HEK293 (cell line): ENCODE measurements at regions of chr21 and their contacts with region 1.

Region 1: DNA sequence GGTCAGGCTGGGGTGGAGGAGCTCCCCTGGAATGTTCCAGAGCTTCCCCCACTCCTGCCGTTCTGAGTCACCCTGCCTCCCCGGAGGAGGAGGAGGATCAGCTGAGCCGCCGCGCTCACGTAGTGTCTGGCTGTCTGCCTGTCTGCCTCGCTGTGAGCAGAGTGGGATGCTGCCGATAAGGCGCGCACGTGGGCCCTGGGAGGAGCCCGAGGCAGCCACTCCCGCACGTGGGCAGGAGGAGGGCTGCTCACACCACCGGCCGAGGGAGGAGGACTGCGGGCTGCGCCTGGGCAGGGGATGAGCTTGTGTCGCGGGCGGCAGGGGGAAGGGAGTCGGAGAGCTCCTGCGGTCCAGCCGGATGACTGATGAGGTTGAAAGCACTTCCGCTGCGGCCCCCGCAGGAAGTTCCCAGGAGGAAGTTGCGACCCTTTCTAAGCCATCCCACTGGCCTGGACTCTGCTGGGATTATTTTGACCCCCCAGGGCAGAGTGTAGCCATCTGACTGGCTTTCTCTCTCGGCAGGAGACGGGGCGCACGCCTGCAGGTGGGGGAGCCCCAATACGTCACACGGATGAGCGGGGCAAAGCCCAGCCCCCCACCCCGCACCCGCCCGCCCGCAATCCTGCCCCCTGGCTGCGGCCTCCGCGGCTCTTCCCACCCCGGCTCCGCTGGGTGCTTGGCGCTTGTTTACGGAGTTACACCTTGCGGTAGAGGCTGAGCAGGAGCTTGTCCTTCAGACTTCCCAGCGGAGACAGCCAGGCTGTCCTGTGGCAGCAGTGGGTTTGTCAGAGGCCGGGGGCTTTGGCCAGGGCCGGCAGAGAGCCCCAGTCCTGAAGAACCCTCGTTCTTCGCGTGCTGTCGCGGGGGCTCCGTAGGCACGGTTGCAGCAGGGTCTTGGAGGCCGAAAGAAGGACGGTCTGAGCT is 9.8 kb downstream of the PDXK start:
- H3K4me3 ChIP-seq: peak overlapping the region; percentile 67
- H3K27ac ChIP-seq: peak overlapping the region; percentile 38
- H3K4me1 ChIP-seq: peaks cover 6% of the 10 kb centered on the region; the same call in 1 of the 2 replicates
- CTCF ChIP-seq: peak; percentile 49; the same call in 1 of the 2 replicates

Region 2: DNA sequence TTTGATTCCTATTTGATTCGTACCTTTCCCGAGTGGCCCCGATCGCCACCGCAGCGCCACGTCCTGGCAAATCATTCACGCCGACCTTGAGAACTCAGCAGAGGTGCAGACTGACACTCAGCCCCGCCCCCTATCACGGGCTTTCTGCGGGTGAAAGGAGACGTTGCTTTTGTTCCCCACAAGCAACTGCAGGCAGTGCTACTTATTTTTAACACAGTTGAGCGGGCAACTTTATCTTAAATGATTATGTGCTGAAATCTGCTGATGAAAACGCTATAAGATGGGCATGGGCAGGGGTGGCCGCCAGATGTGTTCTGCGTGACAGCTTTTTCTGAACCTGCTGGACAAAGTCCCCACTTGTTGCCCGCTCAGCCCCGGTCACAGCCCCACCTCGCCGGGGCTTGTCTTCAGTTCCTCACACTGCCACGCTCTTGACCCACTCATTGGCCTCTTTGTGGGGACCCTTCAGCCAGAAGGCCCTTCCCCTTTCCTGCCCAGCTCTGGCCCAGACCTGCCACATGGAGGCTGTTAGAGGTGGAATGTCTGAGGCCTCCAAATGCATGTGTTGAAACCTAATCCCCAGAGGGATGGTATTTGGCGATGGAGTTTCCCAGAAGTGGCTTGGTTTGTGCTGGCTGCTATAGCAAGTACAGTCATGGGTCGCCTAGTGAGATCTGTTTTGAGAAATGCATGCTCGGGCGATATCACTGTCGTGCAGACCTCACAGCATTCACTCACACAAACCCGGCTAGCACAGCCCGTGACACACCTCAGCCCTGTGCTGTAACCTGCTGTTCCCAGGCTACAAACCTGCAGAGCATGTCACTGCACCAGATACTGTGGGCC is 25.5 kb before region 1 on chr21:
- CTCF ChIA-PET with region 1: interaction called, 12 read pairs
- POLR2A ChIA-PET with region 1: interaction called, 5 read pairs
- H3K4me3 ChIP-seq: no peak overlapping the region
- H3K27ac ChIP-seq: no peak overlapping the region
- H3K4me1 ChIP-seq: no peaks in the 10 kb centered on the region
- CTCF ChIP-seq: no peak

Region 3: GRCh38 chr21:43740497-43741156 is 11.9 kb after region 1 on chr21:
- CTCF ChIA-PET with region 1: interaction called, 4 read pairs
- POLR2A ChIA-PET with region 1: interaction called, 12 read pairs
- H3K4me3 ChIP-seq: no peak overlapping the region
- H3K27ac ChIP-seq: no peak overlapping the region
- H3K4me1 ChIP-seq: no peaks in the 10 kb centered on the region
- CTCF ChIP-seq: no peak

Region 4: DNA sequence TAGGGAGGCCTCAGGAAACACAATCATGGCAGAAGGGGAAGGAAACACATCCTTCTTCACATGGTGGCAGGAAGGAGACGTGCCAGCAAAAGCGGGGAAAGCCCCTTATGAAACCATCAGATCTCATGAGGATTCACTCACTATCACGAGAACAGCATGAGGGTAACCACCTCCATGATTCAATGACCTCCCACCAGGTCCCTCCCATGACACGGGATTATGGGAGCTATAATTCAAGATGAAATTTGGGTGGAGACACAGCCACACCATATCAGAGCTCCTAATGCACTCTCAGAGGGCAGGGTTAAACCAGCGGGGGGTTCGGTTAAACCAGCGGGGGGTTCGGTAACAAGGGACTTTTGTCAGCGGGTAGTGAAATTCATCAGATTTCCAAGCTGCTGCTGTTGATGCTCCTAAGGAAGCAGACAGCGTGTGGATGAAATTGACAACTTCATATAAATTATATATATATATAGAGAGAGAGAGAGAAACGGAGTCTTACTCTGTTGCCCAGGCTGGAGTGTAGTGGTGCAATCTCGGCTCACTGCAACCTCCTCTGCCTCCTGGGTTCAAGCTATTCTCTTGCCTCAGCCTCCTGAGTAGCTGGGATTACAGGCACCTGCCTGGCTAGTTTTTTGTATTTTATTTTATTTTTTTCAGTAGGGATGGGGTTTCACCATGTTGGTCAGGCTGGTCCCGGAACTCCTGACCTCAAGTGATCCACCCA is 43.1 kb after region 1 on chr21:
- CTCF ChIA-PET with region 1: no interaction called
- POLR2A ChIA-PET with region 1: interaction called, 10 read pairs
- H3K4me3 ChIP-seq: no peak overlapping the region
- H3K27ac ChIP-seq: no peak overlapping the region
- H3K4me1 ChIP-seq: no peaks in the 10 kb centered on the region
- CTCF ChIP-seq: no peak

Region 5: DNA sequence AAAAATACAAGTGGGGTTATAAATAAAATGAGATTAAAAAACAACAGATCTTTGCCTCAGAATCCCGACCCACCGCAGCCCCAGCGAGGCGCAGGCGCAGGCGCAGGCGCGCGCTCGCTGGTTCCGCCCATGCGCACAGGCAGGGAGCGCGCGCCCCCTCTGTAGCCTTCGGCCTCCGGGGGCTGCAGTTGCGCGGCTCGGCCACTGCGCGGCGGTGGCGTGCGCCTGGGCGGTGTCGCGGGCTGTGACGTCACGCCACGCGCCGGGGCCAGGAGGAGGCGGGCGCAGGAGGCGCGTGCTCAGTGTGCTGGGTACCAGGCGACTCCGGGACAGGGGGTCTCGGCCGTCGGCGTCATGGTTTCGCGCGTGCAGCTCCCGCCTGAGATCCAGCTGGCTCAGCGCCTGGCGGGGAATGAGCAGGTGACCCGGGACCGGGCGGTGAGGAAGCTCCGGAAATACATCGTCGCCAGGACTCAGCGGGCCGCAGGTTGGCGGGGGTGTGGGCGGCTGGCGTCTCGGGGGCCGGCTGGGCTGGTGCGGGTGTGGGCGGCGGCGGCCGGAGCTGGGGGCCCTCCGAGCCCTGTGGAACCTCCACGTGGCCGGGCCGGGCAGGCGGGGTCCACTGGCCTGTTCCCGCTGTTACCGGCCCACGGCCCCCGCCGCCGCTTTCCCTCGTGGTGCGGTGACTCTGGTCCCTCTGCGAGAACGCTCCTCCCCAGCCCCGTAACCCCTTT is 60.7 kb after region 1 on chr21 and contains the start of gene RRP1:
- CTCF ChIA-PET with region 1: interaction called, 7 read pairs
- POLR2A ChIA-PET with region 1: interaction called, 14 read pairs
- H3K4me3 ChIP-seq: peak within 1 kb of the TSS; percentile 93
- H3K27ac ChIP-seq: peak within 1 kb of the TSS; percentile 80
- H3K4me1 ChIP-seq: peaks cover 8% of the 10 kb centered on the region
- CTCF ChIP-seq: peak; percentile 73; the same call in 1 of the 2 replicates